ENCODE measurements at regions of chr20 and their contacts with region 1.

Region 1: GRCh38 chr20:17584689-17585088 is 14.8 kb downstream of the DSTN start:
- DNase-seq: no peak
- H3K4me3 ChIP-seq: no peak overlapping the region
- H3K27ac ChIP-seq: no peak overlapping the region
- H3K4me1 ChIP-seq: peaks cover 68% of the 10 kb centered on the region
- H3K27me3 ChIP-seq: no peaks in the 10 kb centered on the region
- CTCF ChIP-seq: no peak
- POLR2A ChIP-seq: no peak

Region 2: DNA sequence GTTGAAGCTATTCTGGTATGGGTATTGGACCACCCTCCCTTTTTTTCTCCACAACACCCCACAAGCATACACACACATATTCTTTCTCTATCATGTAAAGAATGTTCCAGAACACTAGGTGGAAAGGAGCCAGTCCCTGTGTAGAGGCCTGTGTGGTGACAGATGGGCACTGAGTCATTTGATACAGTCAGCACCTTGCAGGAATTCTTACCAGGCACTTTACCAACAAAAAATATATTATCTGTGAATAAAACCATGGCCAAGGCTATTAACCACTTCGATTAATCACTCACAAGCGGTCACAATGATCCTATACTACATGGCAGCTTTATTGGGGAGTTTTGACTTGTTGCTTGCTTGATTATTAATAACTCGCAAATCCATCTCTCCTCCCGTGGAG is 203.0 kb before region 1 on chr20:
- intact Hi-C with region 1: no loop called
- DNase-seq: no peak
- H3K4me3 ChIP-seq: no peak overlapping the region
- H3K27ac ChIP-seq: no peak overlapping the region
- H3K4me1 ChIP-seq: no peaks in the 10 kb centered on the region
- H3K27me3 ChIP-seq: no peaks in the 10 kb centered on the region
- CTCF ChIP-seq: no peak
- POLR2A ChIP-seq: no peak

Region 3: DNA sequence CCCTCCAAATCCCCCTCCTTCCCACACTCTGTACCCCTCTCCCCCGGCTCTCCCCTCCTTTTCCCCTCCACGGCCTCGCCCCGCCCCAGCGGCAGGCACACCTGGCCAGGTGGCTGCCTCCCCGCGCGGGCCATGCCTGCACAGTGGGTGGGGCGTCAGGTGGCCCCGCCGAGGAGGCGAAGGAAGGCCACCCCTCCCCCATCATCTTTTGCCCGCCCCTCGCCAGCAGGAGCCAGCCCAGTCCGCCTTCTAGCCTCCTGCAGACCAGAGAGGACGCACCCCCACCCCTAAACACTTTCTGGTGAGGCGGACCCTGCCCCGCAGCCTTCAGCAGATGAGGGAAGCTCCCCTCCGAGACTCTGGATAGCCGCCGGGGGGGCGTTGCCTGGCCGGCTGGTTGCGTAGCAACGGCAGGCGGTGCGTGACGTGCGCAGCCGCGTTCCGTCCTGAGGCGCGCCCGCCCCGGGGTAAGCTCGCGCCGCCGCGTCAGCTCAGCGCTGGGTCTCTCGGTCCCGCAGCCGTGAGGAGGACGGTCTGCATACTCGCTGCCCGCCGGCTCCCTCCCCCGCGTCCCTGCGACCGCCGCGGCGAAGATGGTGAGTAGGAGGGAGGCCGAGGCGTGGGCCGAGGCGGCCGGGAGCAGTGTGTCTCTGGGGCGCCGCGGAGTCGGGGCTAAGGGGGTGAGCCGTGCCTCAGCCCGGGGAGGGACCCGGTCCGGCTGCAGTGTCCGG is 14.9 kb before region 1 on chr20 and contains the start of gene DSTN:
- intact Hi-C with region 1: loop called (anchors 2 kb)
- DNase-seq: peak in 1 of 2 donors; percentile 96
- H3K4me3 ChIP-seq: peak within 1 kb of the TSS; percentile 94 to 96
- H3K27ac ChIP-seq: peak within 1 kb of the TSS; percentile 99
- H3K4me1 ChIP-seq: peaks cover 51% of the 10 kb centered on the region
- H3K27me3 ChIP-seq: no peaks in the 10 kb centered on the region
- CTCF ChIP-seq: no peak
- POLR2A ChIP-seq: peak in 1 of 2 donors; percentile 96
- total RNA-seq, gene DSTN: 326 TPM